ENCODE measurements at regions of chr7 and their contacts with region 1.

Region 1: DNA sequence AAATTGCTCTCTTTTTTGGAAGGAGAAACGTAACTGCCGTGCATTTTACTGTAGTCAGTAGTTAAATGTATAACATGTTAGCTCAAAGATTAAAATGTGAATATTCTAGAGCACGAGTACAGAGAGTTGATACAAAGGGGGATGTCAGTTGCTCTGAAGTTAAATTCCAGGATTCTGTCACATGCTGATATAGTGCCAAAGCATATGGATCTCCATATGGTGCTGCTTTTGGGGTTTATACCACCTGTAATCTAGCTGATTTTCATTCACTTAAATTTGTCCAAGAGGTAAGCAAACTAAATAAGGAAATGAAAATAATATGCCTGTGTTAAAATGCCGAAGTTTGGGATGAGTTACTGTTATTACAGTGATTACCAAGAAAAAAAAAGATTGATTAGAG is 298.6 kb downstream of the EXOC4 start:
- DNase-seq: no peak
- H3K4me3 ChIP-seq: no peak overlapping the region
- H3K27me3 ChIP-seq: no peaks in the 10 kb centered on the region
- CTCF ChIP-seq: no peak

Region 2: GRCh38 chr7:133070562-133070961 is 480.9 kb before region 1 on chr7:
- CTCF ChIA-PET with region 1: no interaction called
- POLR2A ChIA-PET with region 1: interaction called, 10 read pairs
- DNase-seq: no peak
- H3K4me3 ChIP-seq: no peak overlapping the region
- H3K27me3 ChIP-seq: no peaks in the 10 kb centered on the region
- CTCF ChIP-seq: no peak

Region 3: GRCh38 chr7:133582766-133583523 is 31.5 kb after region 1 on chr7:
- CTCF ChIA-PET with region 1: no interaction called
- POLR2A ChIA-PET with region 1: no interaction called
- DNase-seq: peak; percentile 77
- H3K4me3 ChIP-seq: no peak overlapping the region
- H3K27me3 ChIP-seq: no peaks in the 10 kb centered on the region
- CTCF ChIP-seq: no peak

Measured in BJ (cell line).